PC-9 (cell line): ENCODE measurements at regions of chr2 and their contacts with region 1.

Region 1: GRCh38 chr2:156332534-156333273 is at the start of gene NR4A2:
- DNase-seq: peak; percentile 73 to 81
- H3K4me3 ChIP-seq: peak within 1 kb of the TSS; percentile 74
- H3K27ac ChIP-seq: peak within 1 kb of the TSS; percentile 80
- H3K4me1 ChIP-seq: peaks cover 11% of the 10 kb centered on the region
- H3K27me3 ChIP-seq: no peaks in the 10 kb centered on the region
- CTCF ChIP-seq: no peak
- total RNA-seq, gene NR4A2: 2.3 and 3.0 TPM in 2 replicates

Region 2: GRCh38 chr2:155377266-155377680 is 955.4 kb before region 1 on chr2:
- CTCF ChIA-PET with region 1: no interaction called
- POLR2A ChIA-PET with region 1: interaction called, 4 read pairs
- intact Hi-C with region 1: loop called (anchors 5 kb)
- DNase-seq: no peak
- H3K4me3 ChIP-seq: no peak overlapping the region
- H3K27ac ChIP-seq: no peak overlapping the region
- H3K4me1 ChIP-seq: no peaks in the 10 kb centered on the region
- H3K27me3 ChIP-seq: no peaks in the 10 kb centered on the region
- CTCF ChIP-seq: peak; percentile 62

Region 3: DNA sequence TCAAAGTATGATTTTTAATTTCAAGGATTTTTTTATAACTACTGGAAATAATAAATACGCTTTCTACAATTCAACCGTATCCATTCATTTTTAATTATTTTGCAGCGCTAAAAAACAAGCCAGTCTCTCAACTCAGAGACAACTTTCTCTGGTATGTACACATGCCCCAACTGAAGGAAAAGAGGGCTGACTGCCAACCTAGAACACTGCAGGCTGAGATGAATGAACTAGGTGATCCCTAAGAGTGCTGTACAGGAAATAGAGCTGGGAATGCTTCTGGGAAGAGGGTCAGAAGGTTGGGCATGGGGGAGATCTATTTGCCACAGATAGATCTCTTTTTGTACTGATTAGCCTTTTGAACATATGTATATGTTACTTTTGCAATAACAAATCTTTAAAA is 460.3 kb before region 1 on chr2:
- CTCF ChIA-PET with region 1: no interaction called
- POLR2A ChIA-PET with region 1: no interaction called
- intact Hi-C with region 1: no loop called
- DNase-seq: no peak
- H3K4me3 ChIP-seq: no peak overlapping the region
- H3K27ac ChIP-seq: no peak overlapping the region
- H3K4me1 ChIP-seq: no peaks in the 10 kb centered on the region
- H3K27me3 ChIP-seq: no peaks in the 10 kb centered on the region
- CTCF ChIP-seq: no peak

Region 4: DNA sequence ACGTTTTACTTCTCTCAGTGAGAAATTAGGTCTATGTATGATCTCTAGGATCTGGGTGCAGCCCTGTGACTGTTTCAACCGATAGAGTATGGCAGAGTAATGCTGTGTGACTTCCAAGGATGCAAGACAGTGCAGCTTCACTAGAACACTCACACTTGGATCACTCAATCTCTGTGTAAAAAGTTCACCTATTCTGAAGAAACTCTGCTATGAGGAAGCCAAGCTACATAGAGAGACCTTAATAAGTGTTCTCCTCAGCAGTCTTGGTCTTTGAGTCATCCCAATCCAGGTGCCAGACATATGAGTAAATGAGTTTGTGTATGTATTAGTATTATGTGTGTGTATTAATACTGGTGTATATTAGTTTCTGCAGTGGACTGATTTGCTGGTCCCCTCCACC is 335.2 kb before region 1 on chr2:
- CTCF ChIA-PET with region 1: no interaction called
- POLR2A ChIA-PET with region 1: no interaction called
- intact Hi-C with region 1: loop called (anchors 5 kb)
- DNase-seq: no peak
- H3K4me3 ChIP-seq: no peak overlapping the region
- H3K27ac ChIP-seq: no peak overlapping the region
- H3K4me1 ChIP-seq: no peaks in the 10 kb centered on the region
- H3K27me3 ChIP-seq: no peaks in the 10 kb centered on the region
- CTCF ChIP-seq: no peak

Region 5: GRCh38 chr2:156182141-156182540 is 150.6 kb before region 1 on chr2:
- CTCF ChIA-PET with region 1: no interaction called
- POLR2A ChIA-PET with region 1: interaction called, 6 read pairs
- intact Hi-C with region 1: loop called (anchors 2 kb)
- DNase-seq: peak; percentile 52 to 96
- H3K4me3 ChIP-seq: peak overlapping the region; percentile 29; the same call in 1 of the 2 replicates
- H3K27ac ChIP-seq: peak overlapping the region; percentile 96
- H3K4me1 ChIP-seq: peaks cover 36% of the 10 kb centered on the region
- H3K27me3 ChIP-seq: no peaks in the 10 kb centered on the region
- CTCF ChIP-seq: no peak

Region 6: GRCh38 chr2:156455451-156455901 is 122.8 kb after region 1 on chr2:
- CTCF ChIA-PET with region 1: no interaction called
- POLR2A ChIA-PET with region 1: no interaction called
- intact Hi-C with region 1: no loop called
- DNase-seq: peak in 1 of 2 experiments; percentile 78
- H3K4me3 ChIP-seq: no peak overlapping the region
- H3K27ac ChIP-seq: peak overlapping the region; percentile 93
- H3K4me1 ChIP-seq: peaks cover 22% of the 10 kb centered on the region
- H3K27me3 ChIP-seq: no peaks in the 10 kb centered on the region
- CTCF ChIP-seq: no peak

Region 7: GRCh38 chr2:156589381-156590079 is 256.8 kb after region 1 on chr2:
- CTCF ChIA-PET with region 1: interaction called, 3 read pairs
- POLR2A ChIA-PET with region 1: no interaction called
- intact Hi-C with region 1: loop called (anchors 1 kb)
- DNase-seq: no peak
- H3K4me3 ChIP-seq: no peak overlapping the region
- H3K27ac ChIP-seq: no peak overlapping the region
- H3K4me1 ChIP-seq: no peaks in the 10 kb centered on the region
- H3K27me3 ChIP-seq: no peaks in the 10 kb centered on the region
- CTCF ChIP-seq: peak; percentile 65

Region 8: DNA sequence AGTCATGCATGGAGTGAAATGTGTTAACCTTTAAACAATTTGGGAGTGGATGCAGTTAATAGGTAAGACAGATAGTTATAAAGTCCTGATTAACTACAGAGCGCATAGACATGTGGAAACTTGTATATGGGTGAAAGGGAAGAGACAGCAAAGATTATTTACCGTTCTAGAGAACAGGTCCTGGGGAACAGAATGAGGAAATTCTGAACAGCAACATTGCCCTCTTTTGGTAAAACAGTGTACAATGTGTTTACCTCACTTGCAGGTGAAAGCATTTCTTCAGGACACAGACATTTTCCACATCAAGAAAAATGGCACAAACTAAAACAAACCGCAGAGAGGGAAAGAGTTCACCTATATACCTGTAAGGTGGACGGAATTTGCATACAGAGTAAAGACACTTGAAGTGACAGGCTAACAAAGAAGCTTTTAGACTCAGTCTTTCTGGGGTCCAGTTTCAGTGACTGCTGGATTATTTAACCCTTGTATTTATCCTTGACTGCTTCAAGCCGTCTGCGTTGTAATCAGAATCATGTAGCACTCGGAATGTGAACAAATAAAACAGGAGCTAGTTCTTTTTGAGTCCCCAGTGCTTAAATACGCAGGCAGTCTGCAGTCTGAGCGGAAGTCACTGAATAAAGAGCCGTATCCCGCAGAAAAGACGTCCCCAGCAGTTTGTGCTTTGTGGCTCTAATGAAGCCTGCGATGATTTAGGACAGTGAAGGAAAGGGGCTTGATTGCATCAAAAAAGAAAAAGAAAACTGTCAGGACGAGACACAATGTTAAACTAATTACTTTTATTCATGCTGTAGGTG is 560.0 kb after region 1 on chr2:
- CTCF ChIA-PET with region 1: no interaction called
- POLR2A ChIA-PET with region 1: interaction called, 8 read pairs
- intact Hi-C with region 1: loop called (anchors 2 kb)
- DNase-seq: peak in 1 of 2 experiments; percentile 59
- H3K4me3 ChIP-seq: peak overlapping the region; percentile 58
- H3K27ac ChIP-seq: peak overlapping the region; percentile 34
- H3K4me1 ChIP-seq: peaks cover 21% of the 10 kb centered on the region
- H3K27me3 ChIP-seq: no peaks in the 10 kb centered on the region
- CTCF ChIP-seq: peak; percentile 65